Left ventricle myocardium inferior (tissue), 1 donor: ENCODE measurements at regions of chr4 and their contacts with region 1.

Region 1: GRCh38 chr4:108834835-108835384 is 72.1 kb upstream of the ETNPPL start:
- DNase-seq: no peak
- H3K4me3 ChIP-seq: no peak overlapping the region
- H3K27ac ChIP-seq: no peak overlapping the region
- H3K4me1 ChIP-seq: peaks cover 25% of the 10 kb centered on the region
- H3K27me3 ChIP-seq: no peaks in the 10 kb centered on the region
- CTCF ChIP-seq: peak; percentile 80

Region 2: DNA sequence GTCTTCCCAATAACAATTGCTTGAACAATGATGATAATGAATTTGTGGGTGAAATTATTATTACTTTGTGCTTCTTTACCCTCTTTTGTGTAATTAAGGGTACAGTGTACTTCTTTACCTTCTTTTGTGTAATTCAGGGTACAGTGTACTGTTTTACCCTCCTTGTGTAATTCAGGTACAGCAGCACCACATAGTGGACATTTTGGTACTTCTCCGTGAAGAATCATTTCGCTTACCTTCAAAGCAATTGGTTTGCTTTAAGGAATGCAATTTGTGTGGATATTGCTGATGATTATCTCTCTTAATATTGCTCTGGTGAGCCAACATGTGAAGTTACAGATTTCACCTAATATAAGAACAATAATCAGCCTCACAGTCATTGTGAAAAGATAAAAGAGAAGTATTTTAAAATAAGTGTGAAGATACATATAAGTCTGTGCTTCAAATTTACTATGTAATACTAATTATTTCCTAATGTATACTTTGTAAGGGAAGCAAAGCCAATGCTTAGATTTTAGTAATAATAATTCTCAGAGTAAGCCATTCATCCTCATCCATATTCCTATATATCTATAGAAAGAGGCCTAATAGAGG is 571.5 kb after region 1 on chr4:
- intact Hi-C with region 1: loop called (anchors 5 kb)
- DNase-seq: no peak
- H3K4me3 ChIP-seq: no peak overlapping the region
- H3K27ac ChIP-seq: no peak overlapping the region
- H3K4me1 ChIP-seq: peaks cover under 1% of the 10 kb centered on the region
- H3K27me3 ChIP-seq: no peaks in the 10 kb centered on the region
- CTCF ChIP-seq: peak; percentile 79